A549 (cell line): ENCODE measurements at regions of chr19 and their contacts with region 1.

Region 1: DNA sequence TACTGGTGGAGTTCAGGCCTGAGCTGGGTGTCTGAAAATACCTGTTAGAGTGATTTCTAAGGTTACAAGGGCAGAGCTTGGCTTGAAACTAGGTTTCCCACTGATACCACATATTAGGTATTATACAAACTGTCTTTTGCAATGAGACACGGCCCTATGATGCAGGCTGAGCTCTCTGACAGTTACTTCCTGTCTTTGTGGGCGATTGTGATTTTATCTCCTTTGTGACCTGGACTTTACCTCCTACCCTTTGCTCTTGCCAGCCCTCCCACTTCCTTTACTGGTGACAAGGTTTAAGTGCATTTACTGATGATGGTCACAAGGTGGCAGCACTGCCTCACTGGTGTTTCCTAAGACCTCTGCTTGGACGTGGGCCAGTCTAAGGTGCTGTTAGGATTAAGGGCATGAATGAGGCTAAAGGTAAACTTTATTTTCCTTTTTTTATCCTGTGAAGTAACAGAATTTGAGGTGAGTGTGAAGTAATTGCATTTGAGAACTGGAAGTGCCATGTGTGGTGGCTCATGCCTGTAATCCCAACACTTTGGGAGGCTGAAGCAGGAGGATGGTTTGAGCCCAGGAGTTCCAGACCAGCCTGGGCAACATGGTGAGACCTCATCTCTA is 7.7 kb upstream of the CXCL17 start:
- DNase-seq: peak; percentile 97
- ATAC-seq: peak; percentile 87 to 91
- H3K4me3 ChIP-seq: no peak overlapping the region
- H3K27ac ChIP-seq: peak overlapping the region; percentile 1 to 12; a peak in 3 of 6 replicates
- H3K4me1 ChIP-seq: peaks cover 29% of the 10 kb centered on the region
- CTCF ChIP-seq: peak; percentile 100
- EP300 ChIP-seq: no peak
- POLR2A ChIP-seq: no peak
- RAD21 ChIP-seq: peak; percentile 100

Region 2: GRCh38 chr19:41837981-41838708 is 612.3 kb before region 1 on chr19:
- CTCF ChIA-PET with region 1: no interaction called
- POLR2A ChIA-PET with region 1: no interaction called
- DNase-seq: no peak
- ATAC-seq: peak; percentile 7 to 20; a peak in 4 of 6 replicates
- H3K4me3 ChIP-seq: no peak overlapping the region
- H3K27ac ChIP-seq: no peak overlapping the region
- H3K4me1 ChIP-seq: no peaks in the 10 kb centered on the region
- CTCF ChIP-seq: no peak
- EP300 ChIP-seq: no peak
- POLR2A ChIP-seq: no peak
- RAD21 ChIP-seq: no peak

Region 3: DNA sequence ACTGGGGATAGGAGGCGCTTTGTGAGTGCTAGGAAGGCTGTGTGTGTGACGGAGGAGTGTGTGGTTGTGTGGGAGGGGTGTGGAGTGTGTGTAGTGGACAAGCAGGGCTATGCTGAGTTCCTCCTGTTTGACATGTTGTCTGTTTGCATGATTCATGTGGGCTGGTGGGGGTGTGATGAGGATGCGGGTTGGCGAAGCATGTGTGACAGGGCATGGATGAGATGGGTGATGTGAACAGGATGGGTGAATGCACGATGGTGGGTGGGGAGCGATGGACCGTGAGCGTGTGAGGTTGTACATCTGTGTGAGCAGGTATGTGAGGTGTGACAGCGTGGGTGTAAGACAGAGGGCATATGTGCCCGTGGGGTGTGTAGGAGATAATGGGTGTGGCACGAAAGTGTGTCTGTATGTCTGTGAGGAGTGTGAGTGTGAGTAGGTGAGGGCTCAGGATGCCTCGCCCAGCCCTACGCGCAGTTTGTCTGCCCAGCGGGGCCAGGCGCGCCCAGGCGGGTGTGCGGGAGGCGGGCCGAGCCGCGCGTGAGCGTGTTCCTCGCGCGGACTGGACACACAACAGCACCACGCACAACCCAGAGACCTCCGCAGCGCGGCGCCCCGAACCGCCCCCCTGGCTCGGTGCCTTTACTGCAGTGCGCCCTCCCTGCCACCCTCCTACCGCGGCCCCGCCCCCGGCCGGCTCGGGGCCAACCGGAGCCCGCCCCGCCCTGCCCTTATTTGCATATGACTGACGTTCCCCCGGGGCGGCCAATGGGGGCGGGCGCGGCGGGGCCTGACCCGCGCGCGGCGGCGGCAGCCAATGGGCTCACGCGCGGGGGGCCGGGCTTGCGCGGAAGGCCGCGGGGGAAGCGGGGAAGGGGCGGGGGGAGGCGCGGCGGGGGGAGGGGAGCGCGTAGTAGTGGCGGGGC is 167.0 kb before region 1 on chr19:
- CTCF ChIA-PET with region 1: no interaction called
- POLR2A ChIA-PET with region 1: no interaction called
- DNase-seq: peak; percentile 97 to 99
- ATAC-seq: peak; percentile 31 to 56
- H3K4me3 ChIP-seq: peak overlapping the region; percentile 76
- H3K27ac ChIP-seq: peak overlapping the region; percentile 94 to 98
- H3K4me1 ChIP-seq: peaks cover 61% of the 10 kb centered on the region
- CTCF ChIP-seq: 0 out of 3 replicates have a peak, but pooled peaks have one; percentile 5
- EP300 ChIP-seq: no peak
- POLR2A ChIP-seq: peak; percentile 35; the same call in 1 of the 2 replicates
- RAD21 ChIP-seq: no peak

Region 4: GRCh38 chr19:42363614-42364346 is 86.6 kb before region 1 on chr19:
- CTCF ChIA-PET with region 1: no interaction called
- POLR2A ChIA-PET with region 1: no interaction called
- DNase-seq: peak in 1 of 2 experiments; percentile 65
- ATAC-seq: no peak
- H3K4me3 ChIP-seq: no peak overlapping the region
- H3K27ac ChIP-seq: no peak overlapping the region
- H3K4me1 ChIP-seq: no peaks in the 10 kb centered on the region
- CTCF ChIP-seq: no peak
- EP300 ChIP-seq: no peak
- POLR2A ChIP-seq: no peak; the same call in 1 of the 2 replicates
- RAD21 ChIP-seq: no peak

Region 5: DNA sequence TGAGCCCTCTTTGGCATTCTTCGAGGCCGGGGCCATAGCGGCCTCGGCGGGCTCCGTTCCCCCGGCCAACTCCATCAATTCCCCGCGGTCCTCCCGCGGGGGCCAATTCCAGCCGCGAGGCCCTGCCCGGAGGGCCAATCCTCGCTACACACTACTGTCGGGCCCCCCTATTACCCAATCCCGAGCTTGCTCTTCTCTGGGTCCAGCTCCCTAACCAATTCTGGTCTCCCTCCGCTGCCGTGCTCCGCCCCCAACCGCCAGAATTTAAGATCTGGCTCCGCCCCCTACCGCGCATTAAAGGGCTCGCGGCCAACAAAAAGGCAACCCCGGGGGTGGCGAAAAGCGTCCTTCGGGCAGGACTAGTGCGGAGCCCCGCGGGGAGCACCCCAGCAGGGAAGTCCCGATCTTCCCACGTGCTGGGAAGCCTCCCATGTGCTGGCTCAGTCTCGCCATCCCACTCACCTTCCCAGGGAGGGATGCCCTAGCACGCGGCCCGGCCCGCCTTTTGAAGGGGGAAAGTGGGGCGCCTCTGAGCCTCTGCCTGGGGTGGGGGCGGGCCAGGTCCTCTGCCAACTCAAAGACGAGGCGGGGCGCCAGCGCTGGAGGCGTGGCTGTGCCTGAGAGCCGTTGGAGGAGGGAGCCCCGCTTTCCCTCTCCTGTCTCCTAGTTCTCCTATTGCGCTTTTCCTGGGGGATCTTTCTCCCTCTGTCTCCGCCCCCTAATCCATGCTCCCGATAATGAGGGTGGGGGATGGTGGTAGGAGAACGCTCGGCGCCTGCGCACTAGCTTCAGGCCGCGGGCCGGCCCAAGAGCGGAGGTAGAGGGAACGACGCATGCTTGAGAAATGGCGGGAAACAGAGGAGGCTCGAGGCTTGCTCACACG is 26.7 kb before region 1 on chr19:
- CTCF ChIA-PET with region 1: interaction called, 33 read pairs
- POLR2A ChIA-PET with region 1: no interaction called
- DNase-seq: peak; percentile 94 to 100
- ATAC-seq: peak; percentile 80 to 96
- H3K4me3 ChIP-seq: peak overlapping the region; percentile 48
- H3K27ac ChIP-seq: peak overlapping the region; percentile 52 to 78
- H3K4me1 ChIP-seq: peaks cover 18% of the 10 kb centered on the region
- CTCF ChIP-seq: no peak
- EP300 ChIP-seq: no peak
- POLR2A ChIP-seq: no peak
- RAD21 ChIP-seq: no peak

Region 6: GRCh38 chr19:42468273-42468796 is 17.9 kb after region 1 on chr19:
- CTCF ChIA-PET with region 1: interaction called, 92 read pairs
- POLR2A ChIA-PET with region 1: interaction called, 4 read pairs
- DNase-seq: peak in 1 of 2 experiments; percentile 55
- ATAC-seq: peak; percentile 41 to 67; a peak in 4 of 6 replicates
- H3K4me3 ChIP-seq: no peak overlapping the region
- H3K27ac ChIP-seq: peak overlapping the region in 1 of 2 experiments; percentile 34; a peak in 2 of 6 replicates
- H3K4me1 ChIP-seq: peaks cover 33% of the 10 kb centered on the region
- CTCF ChIP-seq: no peak
- EP300 ChIP-seq: no peak
- POLR2A ChIP-seq: no peak
- RAD21 ChIP-seq: no peak

Region 7: GRCh38 chr19:42497492-42498168 is 47.2 kb after region 1 on chr19:
- CTCF ChIA-PET with region 1: interaction called, 42 read pairs
- POLR2A ChIA-PET with region 1: no interaction called
- DNase-seq: peak; percentile 73 to 80
- ATAC-seq: peak; percentile 75 to 93
- H3K4me3 ChIP-seq: no peak overlapping the region; the same call in 2 of the 3 replicates
- H3K27ac ChIP-seq: peak overlapping the region; percentile 73 to 76
- H3K4me1 ChIP-seq: peaks cover 30% of the 10 kb centered on the region
- CTCF ChIP-seq: no peak
- EP300 ChIP-seq: no peak
- POLR2A ChIP-seq: peak; percentile 32
- RAD21 ChIP-seq: 0 out of 5 replicates have a peak, but pooled peaks of 1 of the 2 experiments have one; percentile 2

Region 8: GRCh38 chr19:42546831-42547500 is 96.5 kb after region 1 on chr19:
- CTCF ChIA-PET with region 1: interaction called, 352 read pairs
- POLR2A ChIA-PET with region 1: no interaction called
- DNase-seq: no peak
- ATAC-seq: no peak
- H3K4me3 ChIP-seq: no peak overlapping the region
- H3K27ac ChIP-seq: no peak overlapping the region
- H3K4me1 ChIP-seq: no peaks in the 10 kb centered on the region
- CTCF ChIP-seq: no peak
- EP300 ChIP-seq: no peak
- POLR2A ChIP-seq: no peak
- RAD21 ChIP-seq: no peak

Region 9: DNA sequence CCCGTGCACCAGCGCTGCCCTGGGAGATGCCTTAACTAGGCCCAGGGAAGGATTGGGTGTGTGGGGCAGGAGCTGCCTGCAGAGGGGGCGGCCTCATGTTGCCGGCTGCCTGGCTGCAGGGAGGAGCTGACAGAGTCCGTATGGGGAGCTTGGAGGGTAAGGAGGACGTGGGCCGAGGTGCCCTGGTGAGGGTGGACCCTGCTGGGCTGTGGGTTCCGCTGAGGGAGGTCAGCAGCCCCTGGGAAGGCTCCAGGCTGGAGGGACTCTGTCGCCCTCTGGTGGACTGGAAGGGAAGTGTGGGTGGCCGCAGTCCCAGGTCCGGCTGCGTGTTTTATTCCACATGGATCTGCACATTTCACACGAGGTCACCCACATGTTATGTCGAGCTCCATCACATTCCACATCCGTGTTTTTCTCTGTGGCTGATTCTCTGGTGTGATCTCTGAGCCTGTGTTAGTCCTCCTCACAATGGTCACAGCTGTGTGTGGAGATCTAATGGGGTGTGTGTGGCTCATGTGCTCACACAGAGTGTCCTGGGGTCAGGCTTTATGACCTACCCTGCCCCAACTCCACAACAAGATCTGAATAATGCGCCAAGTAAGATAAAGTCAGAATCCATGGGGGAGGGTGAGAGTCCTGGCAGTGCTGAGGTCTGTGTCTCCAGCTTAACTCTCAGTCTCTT is 146.1 kb after region 1 on chr19:
- CTCF ChIA-PET with region 1: interaction called, 37 read pairs
- POLR2A ChIA-PET with region 1: no interaction called
- DNase-seq: peak; percentile 36 to 64
- ATAC-seq: peak; percentile 44 to 90; a peak in 5 of 6 replicates
- H3K4me3 ChIP-seq: no peak overlapping the region
- H3K27ac ChIP-seq: no peak overlapping the region
- H3K4me1 ChIP-seq: no peaks in the 10 kb centered on the region
- CTCF ChIP-seq: peak; percentile 96
- EP300 ChIP-seq: no peak
- POLR2A ChIP-seq: no peak
- RAD21 ChIP-seq: peak; percentile 70 to 77